Natural killer cell (primary cell): ENCODE measurements at regions of chr9 and their contacts with region 1.

Region 1: DNA sequence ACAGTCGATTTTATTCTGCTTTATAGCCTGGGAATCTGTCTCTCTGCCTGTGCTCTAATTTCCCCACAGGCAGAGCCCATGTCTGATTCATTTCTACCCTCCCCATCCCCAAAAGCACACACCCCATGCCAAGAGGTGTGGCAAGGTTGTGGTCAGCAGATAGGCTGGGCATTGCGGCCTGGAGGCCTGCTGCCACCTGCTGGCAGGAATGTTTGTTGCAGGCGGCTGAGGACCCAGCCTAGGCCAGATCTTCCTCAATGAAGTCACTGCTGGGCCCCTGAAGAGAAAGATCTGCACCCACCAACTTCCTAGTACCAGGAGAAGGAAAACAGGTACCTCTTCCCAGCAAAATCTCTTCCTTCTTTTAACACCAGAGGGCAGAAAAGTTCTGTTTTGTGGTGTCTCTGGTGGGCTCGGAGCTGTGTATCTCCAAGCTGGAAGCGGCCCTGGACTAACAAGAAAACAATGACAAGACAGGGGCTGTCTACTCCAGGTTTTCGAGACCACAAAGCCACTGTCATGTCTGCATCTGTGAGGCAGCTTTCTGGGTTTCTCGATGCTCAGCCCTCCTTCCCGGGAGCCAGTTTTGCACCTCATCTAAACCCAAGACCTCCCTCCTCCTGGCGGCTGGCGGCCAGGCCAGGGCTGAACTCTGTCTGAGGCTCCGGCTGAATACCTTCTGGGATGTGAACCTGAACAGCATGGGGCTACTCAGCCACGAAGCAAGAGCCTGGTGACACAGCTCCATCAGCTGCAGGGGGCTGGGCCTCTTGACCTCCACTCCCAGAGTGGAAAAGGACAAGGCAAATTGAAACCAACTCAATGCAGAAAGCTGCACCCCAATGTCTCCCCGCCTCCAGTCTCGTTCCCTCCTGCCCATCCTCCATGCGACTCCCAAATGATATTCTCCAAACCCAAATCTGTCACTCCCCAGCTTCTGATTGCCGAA is 4.9 kb downstream of the ANKS6 start:
- DNase-seq: peak; percentile 60 to 75
- ATAC-seq: peak; percentile 83 to 87 (median 87)
- H3K4me3 ChIP-seq: no peak overlapping the region
- H3K4me3 Mint-ChIP-seq: no peak overlapping the region
- H3K27ac ChIP-seq: no peak overlapping the region
- H3K27ac Mint-ChIP-seq: no peak overlapping the region
- H3K4me1 ChIP-seq: peaks cover 12% of the 10 kb centered on the region
- H3K4me1 Mint-ChIP-seq: peaks cover 24 to 29% of the 10 kb centered on the region in 2 donors
- H3K27me3 ChIP-seq: no peaks in the 10 kb centered on the region
- H3K27me3 Mint-ChIP-seq: no peaks in the 10 kb centered on the region
- CTCF ChIP-seq: peak; percentile 96

Region 2: GRCh38 chr9:98315551-98316060 is 475.8 kb before region 1 on chr9:
- intact Hi-C with region 1: loop called (anchors 2 kb)
- DNase-seq: peak; percentile 66 to 86
- ATAC-seq: peak; percentile 87 to 95 (median 88)
- H3K4me3 ChIP-seq: no peak overlapping the region
- H3K4me3 Mint-ChIP-seq: no peak overlapping the region
- H3K27ac ChIP-seq: no peak overlapping the region
- H3K27ac Mint-ChIP-seq: no peak overlapping the region
- H3K4me1 ChIP-seq: no peaks in the 10 kb centered on the region
- H3K4me1 Mint-ChIP-seq: peaks cover 0 to 5% of the 10 kb centered on the region in 2 donors
- H3K27me3 ChIP-seq: no peaks in the 10 kb centered on the region
- H3K27me3 Mint-ChIP-seq: peaks cover 0 to 3% of the 10 kb centered on the region in 2 donors
- CTCF ChIP-seq: peak; percentile 81

Region 3: DNA sequence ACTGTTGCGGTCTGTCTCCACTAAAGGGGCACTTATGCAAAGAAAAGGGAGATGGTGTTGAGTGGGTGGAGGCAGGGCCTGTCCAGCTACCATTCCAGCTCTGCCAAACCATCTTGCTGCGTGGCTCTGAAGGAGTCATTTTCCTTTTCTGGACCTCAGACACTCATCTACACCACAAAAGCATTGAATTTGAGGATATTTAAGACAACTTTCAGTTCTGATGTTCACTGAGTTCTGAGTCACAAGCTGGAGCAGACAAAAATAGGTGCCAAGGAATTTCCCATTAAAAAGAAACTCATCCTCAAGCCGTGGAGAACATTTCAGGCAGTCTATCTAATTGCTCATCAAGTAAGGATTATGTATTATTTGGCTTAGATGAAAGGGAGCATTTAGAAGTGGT is 340.9 kb before region 1 on chr9:
- intact Hi-C with region 1: no loop called
- DNase-seq: no peak
- ATAC-seq: no peak
- H3K4me3 ChIP-seq: no peak overlapping the region
- H3K4me3 Mint-ChIP-seq: no peak overlapping the region
- H3K27ac ChIP-seq: no peak overlapping the region
- H3K27ac Mint-ChIP-seq: no peak overlapping the region
- H3K4me1 ChIP-seq: no peaks in the 10 kb centered on the region
- H3K4me1 Mint-ChIP-seq: no peaks in the 10 kb centered on the region
- H3K27me3 ChIP-seq: peaks cover 2% of the 10 kb centered on the region
- H3K27me3 Mint-ChIP-seq: peaks cover 9 to 13% of the 10 kb centered on the region in 2 donors
- CTCF ChIP-seq: no peak

Region 4: GRCh38 chr9:98536542-98537173 is 254.8 kb before region 1 on chr9:
- intact Hi-C with region 1: loop called (anchors 5 kb)
- DNase-seq: peak in 1 of 2 donors; percentile 17
- ATAC-seq: peak in 1 of 3 donors; percentile 12
- H3K4me3 ChIP-seq: no peak overlapping the region
- H3K4me3 Mint-ChIP-seq: no peak overlapping the region
- H3K27ac ChIP-seq: no peak overlapping the region
- H3K27ac Mint-ChIP-seq: no peak overlapping the region
- H3K4me1 ChIP-seq: no peaks in the 10 kb centered on the region
- H3K4me1 Mint-ChIP-seq: no peaks in the 10 kb centered on the region
- H3K27me3 ChIP-seq: no peaks in the 10 kb centered on the region
- H3K27me3 Mint-ChIP-seq: peaks cover 5 to 10% of the 10 kb centered on the region in 2 donors
- CTCF ChIP-seq: no peak